Esophagus squamous epithelium (tissue), 5 donors: ENCODE measurements at regions of chr9 and their contacts with region 1.

Region 1: GRCh38 chr9:92590377-92590776 is 54.6 kb upstream of the ECM2 start:
- DNase-seq: no peak
- H3K4me3 ChIP-seq: no peak overlapping the region
- H3K27ac ChIP-seq: peak overlapping the region in 3 of 4 donors; percentile 35 to 81 (median 67)
- H3K4me1 ChIP-seq: peaks cover 10 to 45% (median 13%) of the 10 kb centered on the region in 3 donors
- H3K27me3 ChIP-seq: no peaks in the 10 kb centered on the region
- CTCF ChIP-seq: no peak
- POLR2A ChIP-seq: no peak

Region 2: GRCh38 chr9:92501671-92502393 is 88.5 kb before region 1 on chr9:
- intact Hi-C with region 1: loop called (anchors 10 kb)
- DNase-seq: no peak
- H3K4me3 ChIP-seq: no peak overlapping the region
- H3K27ac ChIP-seq: peak overlapping the region; percentile 20 to 60 (median 44)
- H3K4me1 ChIP-seq: peaks cover 4 to 51% (median 33%) of the 10 kb centered on the region in 3 donors
- H3K27me3 ChIP-seq: no peaks in the 10 kb centered on the region
- CTCF ChIP-seq: peak in 5 of 6 experiments; percentile 21 to 52 (median 37)
- POLR2A ChIP-seq: no peak

Region 3: GRCh38 chr9:92738661-92739081 is 148.3 kb after region 1 on chr9:
- intact Hi-C with region 1: no loop called
- DNase-seq: no peak
- H3K4me3 ChIP-seq: no peak overlapping the region
- H3K27ac ChIP-seq: peak overlapping the region; percentile 66 to 80 (median 72)
- H3K4me1 ChIP-seq: peaks cover 45 to 87% (median 64%) of the 10 kb centered on the region in 3 donors
- H3K27me3 ChIP-seq: no peaks in the 10 kb centered on the region
- CTCF ChIP-seq: no peak
- POLR2A ChIP-seq: no peak

Region 4: GRCh38 chr9:93041108-93041802 is 450.9 kb after region 1 on chr9:
- intact Hi-C with region 1: no loop called
- DNase-seq: no peak
- H3K4me3 ChIP-seq: no peak overlapping the region
- H3K27ac ChIP-seq: no peak overlapping the region
- H3K4me1 ChIP-seq: no peaks in the 10 kb centered on the region
- H3K27me3 ChIP-seq: no peaks in the 10 kb centered on the region
- CTCF ChIP-seq: no peak
- POLR2A ChIP-seq: no peak